ENCODE measurements at regions of chr11 and their contacts with region 1.

Region 1: DNA sequence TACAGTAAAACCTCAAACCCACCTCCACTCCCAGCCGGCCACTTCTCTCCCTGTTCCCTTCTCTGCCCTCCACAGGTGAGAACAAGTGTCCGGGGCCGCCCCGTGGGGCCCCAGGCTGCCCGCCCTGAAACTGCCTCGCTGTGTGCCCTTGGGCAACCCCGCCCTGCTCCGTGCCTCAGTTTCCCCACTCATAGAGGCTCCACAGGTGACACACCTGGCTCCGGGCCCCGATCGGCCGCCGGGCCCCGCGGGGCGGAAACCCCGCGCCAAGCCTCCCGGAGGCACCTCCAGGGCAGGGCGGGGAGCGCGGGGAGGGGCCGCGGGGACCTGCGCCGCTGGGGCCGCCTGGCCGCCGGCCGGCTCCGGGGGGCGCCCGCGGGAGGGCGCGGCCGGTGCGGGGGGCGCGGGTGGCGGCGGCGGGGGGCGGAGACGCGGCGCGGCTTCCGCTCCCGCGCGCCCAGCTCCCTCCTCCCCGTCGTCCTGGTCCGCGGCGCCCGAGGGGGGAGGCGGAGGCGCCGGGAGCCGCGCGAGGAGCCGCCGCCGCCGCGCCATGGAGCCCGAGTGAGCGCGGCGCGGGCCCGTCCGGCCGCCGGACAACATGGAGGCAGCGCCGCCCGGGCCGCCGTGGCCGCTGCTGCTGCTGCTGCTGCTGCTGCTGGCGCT is at the start of gene LRP5:
- DNase-seq: no peak
- ATAC-seq: no peak
- H3K4me3 ChIP-seq: peak within 1 kb of the TSS; percentile 89 to 98 (median 95)
- H3K27ac ChIP-seq: peak within 1 kb of the TSS; percentile 91
- H3K4me1 ChIP-seq: peaks cover 66% of the 10 kb centered on the region
- H3K27me3 ChIP-seq: no peaks in the 10 kb centered on the region; a peak in 1 of 5 replicates
- CTCF ChIP-seq: no peak
- EP300 ChIP-seq: no peak
- POLR2A ChIP-seq: peak in 1 of 2 experiments; percentile 31; a peak in 2 of 4 replicates
- RAD21 ChIP-seq: no peak
- total RNA-seq, gene LRP5: 23.6 and 40.4 TPM in 2 replicates

Region 2: GRCh38 chr11:66800720-66801428 is 1511.4 kb before region 1 on chr11:
- CTCF ChIA-PET with region 1: no interaction called
- POLR2A ChIA-PET with region 1: no interaction called
- in situ Hi-C with region 1: no loop called
- intact Hi-C with region 1: no loop called
- DNase-seq: no peak
- ATAC-seq: no peak
- H3K4me3 ChIP-seq: no peak overlapping the region
- H3K27ac ChIP-seq: no peak overlapping the region
- H3K4me1 ChIP-seq: no peaks in the 10 kb centered on the region
- H3K27me3 ChIP-seq: no peaks in the 10 kb centered on the region
- CTCF ChIP-seq: no peak
- EP300 ChIP-seq: no peak
- POLR2A ChIP-seq: no peak
- RAD21 ChIP-seq: no peak

Region 3: DNA sequence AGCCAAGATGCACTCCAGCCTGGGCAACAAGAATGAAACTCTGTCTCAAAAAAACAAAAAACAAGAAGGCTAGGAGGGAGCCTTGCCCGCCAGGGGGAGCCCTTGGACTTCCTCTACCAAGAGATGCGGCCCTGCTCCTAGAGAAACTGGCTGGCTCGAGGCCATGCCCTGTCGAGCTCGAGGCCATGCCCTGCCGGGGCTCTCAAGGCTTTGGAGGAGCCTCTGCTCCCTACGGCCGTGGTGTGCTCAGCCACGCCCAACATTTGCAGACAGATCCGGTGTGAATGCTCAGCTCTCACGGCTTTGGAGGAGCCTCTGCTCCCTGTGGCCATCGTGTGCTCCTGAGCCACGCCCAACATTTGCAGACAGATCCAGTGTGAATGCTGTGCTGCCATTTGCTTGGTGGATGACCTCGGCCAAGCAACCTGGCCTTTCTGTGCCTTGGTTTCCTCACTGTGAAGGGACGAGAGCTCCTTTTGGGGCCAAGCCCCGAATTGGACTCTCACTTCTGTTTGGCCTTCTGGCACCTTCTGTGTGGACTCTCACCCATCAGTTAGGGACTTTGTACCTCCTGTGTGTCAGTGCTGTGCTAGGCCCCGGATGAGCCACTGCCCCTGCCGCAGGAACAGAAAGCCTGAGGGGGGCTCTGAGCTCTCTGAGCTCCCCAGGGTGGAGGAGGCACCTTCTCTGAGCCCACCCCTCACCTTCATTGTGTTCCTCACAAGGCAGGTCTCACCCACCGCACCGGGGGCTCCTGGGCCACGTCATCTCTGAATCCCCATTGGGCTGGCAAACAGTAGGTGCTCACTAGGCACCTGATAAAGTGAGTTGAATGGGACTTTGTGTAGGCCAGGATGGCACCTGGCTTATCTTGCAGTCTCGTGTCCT is 54.5 kb before region 1 on chr11:
- CTCF ChIA-PET with region 1: no interaction called
- POLR2A ChIA-PET with region 1: interaction called, 11 read pairs
- in situ Hi-C with region 1: no loop called
- intact Hi-C with region 1: loop called (anchors 5 kb)
- DNase-seq: peak; percentile 83
- ATAC-seq: peak; percentile 76
- H3K4me3 ChIP-seq: peak overlapping the region in 1 of 3 experiments; percentile 17; a peak in 1 of 6 replicates
- H3K27ac ChIP-seq: no peak overlapping the region
- H3K4me1 ChIP-seq: peaks cover 33% of the 10 kb centered on the region
- H3K27me3 ChIP-seq: no peaks in the 10 kb centered on the region; a peak in 1 of 5 replicates
- CTCF ChIP-seq: peak; percentile 92
- EP300 ChIP-seq: no peak
- POLR2A ChIP-seq: 0 out of 4 replicates have a peak, but pooled peaks of 1 of the 2 experiments have one; percentile 16
- RAD21 ChIP-seq: peak; percentile 93

Region 4: GRCh38 chr11:68328374-68329091 is 16.3 kb after region 1 on chr11:
- CTCF ChIA-PET with region 1: no interaction called
- POLR2A ChIA-PET with region 1: interaction called, 75 read pairs
- in situ Hi-C with region 1: no loop called
- intact Hi-C with region 1: loop called (anchors 2 kb)
- DNase-seq: peak; percentile 86
- ATAC-seq: peak; percentile 44
- H3K4me3 ChIP-seq: peak overlapping the region in 1 of 3 experiments; percentile 27; a peak in 1 of 6 replicates
- H3K27ac ChIP-seq: peak overlapping the region; percentile 82
- H3K4me1 ChIP-seq: peaks cover 100% of the 10 kb centered on the region
- H3K27me3 ChIP-seq: no peaks in the 10 kb centered on the region
- CTCF ChIP-seq: no peak
- EP300 ChIP-seq: peak in 1 of 2 experiments; percentile 52; a peak in 1 of 4 replicates
- POLR2A ChIP-seq: no peak
- RAD21 ChIP-seq: no peak

Region 5: GRCh38 chr11:68370211-68371111 is 58.2 kb after region 1 on chr11:
- CTCF ChIA-PET with region 1: no interaction called
- POLR2A ChIA-PET with region 1: interaction called, 8 read pairs
- in situ Hi-C with region 1: no loop called
- intact Hi-C with region 1: loop called (anchors 5 kb)
- DNase-seq: no peak
- ATAC-seq: no peak
- H3K4me3 ChIP-seq: no peak overlapping the region
- H3K27ac ChIP-seq: no peak overlapping the region
- H3K4me1 ChIP-seq: peaks cover 40% of the 10 kb centered on the region
- H3K27me3 ChIP-seq: no peaks in the 10 kb centered on the region
- CTCF ChIP-seq: no peak
- EP300 ChIP-seq: no peak
- POLR2A ChIP-seq: no peak
- RAD21 ChIP-seq: no peak

Region 6: DNA sequence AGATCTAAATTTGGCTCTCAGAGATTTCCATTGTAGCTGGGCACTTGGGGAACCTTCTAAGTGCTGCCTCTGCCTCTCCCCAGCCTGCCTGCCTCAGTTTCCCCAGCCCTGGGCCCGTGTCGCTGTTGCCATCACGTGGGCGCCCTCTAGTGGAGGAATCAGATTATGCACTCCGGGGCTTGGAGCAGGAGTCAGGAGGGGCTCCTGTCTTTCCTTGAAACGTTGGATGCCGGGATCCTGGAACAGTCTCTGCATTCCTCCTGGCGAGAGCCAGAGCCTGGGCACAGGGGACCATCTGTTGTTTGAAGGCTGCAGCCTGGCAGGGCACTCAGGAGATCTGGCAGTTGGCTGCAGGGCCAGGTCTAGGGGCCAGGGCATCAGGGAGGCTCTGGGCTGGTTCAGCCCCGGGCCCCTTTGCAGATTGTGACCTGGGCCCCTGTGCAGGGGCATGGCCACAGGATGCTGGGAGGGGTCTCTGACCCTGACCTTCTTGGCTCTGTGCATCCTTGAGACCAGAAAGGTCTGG is 71.8 kb after region 1 on chr11:
- CTCF ChIA-PET with region 1: no interaction called
- POLR2A ChIA-PET with region 1: interaction called, 18 read pairs
- in situ Hi-C with region 1: loop called (anchors 5 kb)
- intact Hi-C with region 1: no loop called
- DNase-seq: peak; percentile 43
- ATAC-seq: no peak
- H3K4me3 ChIP-seq: no peak overlapping the region
- H3K27ac ChIP-seq: no peak overlapping the region
- H3K4me1 ChIP-seq: peaks cover 46% of the 10 kb centered on the region
- H3K27me3 ChIP-seq: no peaks in the 10 kb centered on the region
- CTCF ChIP-seq: peak; percentile 89
- EP300 ChIP-seq: no peak
- POLR2A ChIP-seq: 0 out of 4 replicates have a peak, but pooled peaks of 1 of the 2 experiments have one; percentile 12
- RAD21 ChIP-seq: peak; percentile 91

Measured in HepG2 (cell line).